A673 (cell line): ENCODE measurements at regions of chr10 and their contacts with region 1.

Region 1: GRCh38 chr10:92506336-92506735 is 67.6 kb downstream of the IDE start:
- DNase-seq: peak; percentile 71
- H3K4me3 ChIP-seq: peak overlapping the region; percentile 21
- H3K27ac ChIP-seq: peak overlapping the region; percentile 63
- H3K4me1 ChIP-seq: peaks cover 24% of the 10 kb centered on the region
- H3K27me3 ChIP-seq: no peaks in the 10 kb centered on the region
- CTCF ChIP-seq: no peak

Region 2: GRCh38 chr10:92303096-92303495 is 203.2 kb before region 1 on chr10:
- CTCF ChIA-PET with region 1: no interaction called
- POLR2A ChIA-PET with region 1: no interaction called
- intact Hi-C with region 1: no loop called
- DNase-seq: no peak
- H3K4me3 ChIP-seq: no peak overlapping the region
- H3K27ac ChIP-seq: no peak overlapping the region
- H3K4me1 ChIP-seq: peaks cover 13% of the 10 kb centered on the region
- H3K27me3 ChIP-seq: no peaks in the 10 kb centered on the region
- CTCF ChIP-seq: no peak

Region 3: DNA sequence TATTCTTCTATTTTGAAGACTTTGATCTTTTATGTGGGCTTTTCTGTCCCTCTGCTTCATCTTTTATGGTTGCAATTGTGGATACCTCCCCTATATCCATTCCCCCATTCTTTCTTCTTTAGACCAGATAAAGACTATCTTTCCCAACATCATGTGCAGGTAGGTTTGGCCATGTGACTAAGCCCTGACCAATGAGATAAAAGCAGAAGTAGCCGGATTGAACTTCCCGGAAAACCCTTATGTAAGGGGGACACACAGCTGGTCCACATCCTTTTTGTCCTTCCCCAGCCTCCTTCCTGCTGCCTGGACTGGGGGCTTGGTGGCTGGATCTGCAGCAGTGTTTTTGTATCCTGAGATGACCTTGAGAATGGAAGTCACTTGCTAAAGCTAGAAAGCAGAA is 308.5 kb after region 1 on chr10:
- CTCF ChIA-PET with region 1: no interaction called
- POLR2A ChIA-PET with region 1: interaction called, 17 read pairs
- intact Hi-C with region 1: no loop called
- DNase-seq: no peak
- H3K4me3 ChIP-seq: no peak overlapping the region
- H3K27ac ChIP-seq: no peak overlapping the region
- H3K4me1 ChIP-seq: peaks cover 23% of the 10 kb centered on the region
- H3K27me3 ChIP-seq: no peaks in the 10 kb centered on the region
- CTCF ChIP-seq: no peak